AG04449 (cell line): ENCODE measurements at regions of chr3 and their contacts with region 1.

Region 1: DNA sequence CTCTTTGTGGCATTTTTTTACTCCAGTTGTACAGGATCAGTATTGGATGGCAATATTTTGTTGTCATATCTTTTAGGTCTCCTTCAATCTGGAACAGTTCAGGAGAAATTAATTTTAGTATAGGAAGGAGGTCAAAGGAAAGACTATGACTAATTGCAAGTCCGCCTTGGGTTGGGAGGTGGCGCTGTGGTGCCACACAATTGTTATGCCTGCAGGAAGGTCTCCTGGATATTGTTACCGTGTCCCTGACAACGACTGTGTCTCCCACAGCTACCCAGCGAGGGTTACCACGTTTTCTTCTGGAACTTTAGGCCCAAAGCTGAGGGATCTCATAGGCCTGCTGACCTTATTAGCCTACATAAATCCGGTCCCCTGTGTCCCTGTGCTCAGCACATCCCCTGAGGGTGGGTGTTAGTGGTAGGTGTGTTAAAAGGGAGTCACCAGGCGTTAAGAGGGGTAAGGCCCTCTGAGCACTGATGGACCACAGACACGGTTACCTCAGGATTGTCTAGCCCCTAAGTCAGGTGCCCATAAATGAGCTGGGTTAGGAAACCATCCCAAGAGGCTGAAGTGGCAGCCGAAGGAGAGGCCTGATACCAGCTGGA is 31.5 kb downstream of the KCNAB1 start:
- DNase-seq: peak; percentile 23
- H3K4me3 ChIP-seq: no peak overlapping the region
- CTCF ChIP-seq: peak; percentile 85

Region 2: GRCh38 chr3:156174229-156174847 is 22.4 kb after region 1 on chr3:
- CTCF ChIA-PET with region 1: interaction called, 64 read pairs
- POLR2A ChIA-PET with region 1: interaction called, 3 read pairs
- DNase-seq: no peak
- H3K4me3 ChIP-seq: no peak overlapping the region
- CTCF ChIP-seq: peak; percentile 59

Region 3: DNA sequence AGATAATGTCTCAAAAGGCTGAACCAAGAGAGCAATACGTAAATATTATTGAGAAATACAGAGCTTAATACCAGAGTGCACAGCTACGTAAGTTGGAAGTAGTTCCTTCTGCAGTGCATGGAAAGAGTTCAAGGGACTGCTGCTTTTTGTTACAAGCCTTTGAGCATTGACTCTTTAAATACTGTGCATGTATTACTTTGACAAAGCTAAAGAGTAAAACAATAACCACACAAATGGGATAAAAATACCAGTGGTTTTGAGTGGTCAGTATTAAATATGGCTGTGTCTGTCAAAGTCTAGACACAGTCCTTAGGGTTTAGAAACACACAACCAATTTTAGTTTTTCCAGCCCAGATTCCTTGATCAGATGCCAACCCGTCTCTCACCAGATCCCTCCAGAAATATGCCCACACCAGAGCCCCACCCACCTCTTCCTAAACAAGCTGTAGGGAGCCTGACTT is 340.9 kb after region 1 on chr3:
- CTCF ChIA-PET with region 1: interaction called, 10 read pairs
- POLR2A ChIA-PET with region 1: no interaction called
- DNase-seq: no peak
- H3K4me3 ChIP-seq: no peak overlapping the region
- CTCF ChIP-seq: no peak

Region 4: DNA sequence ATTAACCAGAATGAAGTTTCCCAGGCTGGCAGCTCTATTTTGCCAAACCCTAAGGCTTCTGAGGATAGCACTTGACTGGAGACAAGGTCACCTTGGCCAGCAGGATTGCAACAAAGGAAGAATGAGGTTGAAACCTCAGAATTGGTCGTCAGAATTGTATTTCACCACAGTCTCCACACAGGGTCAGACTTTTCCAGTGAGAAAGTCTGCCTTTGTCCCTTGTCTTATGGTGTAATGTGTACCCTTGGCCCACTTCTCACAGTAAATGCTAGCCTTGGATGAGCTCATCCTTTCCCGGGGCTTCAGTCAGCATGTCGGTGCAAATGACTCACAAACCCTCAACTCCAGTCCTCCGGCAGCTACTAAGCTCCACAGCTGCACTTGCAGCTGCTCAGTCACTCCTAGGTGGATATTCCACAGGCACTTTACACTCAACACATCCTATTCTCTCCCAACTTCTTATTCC is 383.3 kb after region 1 on chr3:
- CTCF ChIA-PET with region 1: interaction called, 121 read pairs
- POLR2A ChIA-PET with region 1: interaction called, 4 read pairs
- DNase-seq: peak; percentile 97
- H3K4me3 ChIP-seq: no peak overlapping the region
- CTCF ChIP-seq: peak; percentile 29

Region 5: DNA sequence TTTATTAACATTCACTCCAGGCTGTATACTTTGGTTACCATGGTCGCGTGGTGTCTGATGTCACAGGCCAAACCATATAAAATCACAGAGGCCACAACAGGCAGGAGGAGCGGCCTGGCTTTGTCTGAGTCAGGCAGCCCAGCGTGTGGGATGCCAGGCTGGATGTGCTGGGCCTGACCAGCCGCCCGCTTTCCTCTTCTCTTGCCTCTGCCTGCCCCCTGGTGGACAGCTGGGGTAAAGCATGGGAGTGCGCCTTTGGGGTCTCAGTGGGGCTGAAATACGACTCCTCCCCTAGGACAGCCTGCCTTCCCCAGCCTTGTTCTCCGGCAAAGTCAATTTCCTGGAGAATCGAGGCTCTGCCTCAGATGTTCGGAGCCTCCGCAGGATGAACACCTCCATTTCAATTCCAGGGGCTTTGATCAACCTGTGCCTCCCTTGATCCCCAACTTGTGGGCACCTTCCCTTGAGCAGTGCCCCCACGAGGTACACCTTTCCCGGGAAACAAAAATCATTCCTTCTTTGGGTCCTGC is 929.8 kb after region 1 on chr3:
- CTCF ChIA-PET with region 1: interaction called, 45 read pairs
- POLR2A ChIA-PET with region 1: no interaction called
- DNase-seq: peak; percentile 60
- H3K4me3 ChIP-seq: no peak overlapping the region
- CTCF ChIP-seq: peak; percentile 96